A673 (cell line): ENCODE measurements at regions of chr15 and their contacts with region 1.

Region 1: DNA sequence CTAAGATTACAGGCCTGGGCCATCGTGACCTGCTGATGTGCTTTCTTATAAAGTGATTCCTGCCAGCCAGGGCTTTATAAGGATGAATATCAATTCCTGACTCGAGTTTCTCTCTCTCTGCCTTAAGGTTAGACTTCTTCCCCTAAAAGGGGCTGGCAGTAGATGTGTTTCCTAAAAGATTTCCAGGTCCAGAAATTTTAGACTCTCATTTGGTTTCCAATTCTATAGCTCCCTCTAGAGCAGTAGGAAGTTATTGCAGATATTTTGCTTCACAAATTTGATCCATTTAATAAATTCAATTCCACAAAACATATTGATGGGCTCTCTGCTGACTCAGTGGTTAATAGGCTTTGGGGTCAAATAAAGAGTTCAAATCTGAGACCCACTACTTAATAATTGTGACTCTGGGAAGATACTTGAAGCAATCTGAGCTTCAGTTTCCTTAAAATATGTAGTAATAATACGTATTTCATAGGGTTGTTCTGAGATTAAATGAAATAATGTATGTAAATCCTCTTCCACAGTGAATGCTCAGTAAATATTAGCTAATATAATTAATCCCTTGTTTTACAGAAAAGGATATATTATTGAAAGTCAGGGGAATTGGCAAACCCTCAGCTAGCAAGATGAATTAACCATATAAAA is 2.1 kb downstream of the TRIM69 start:
- DNase-seq: peak; percentile 85
- H3K4me3 ChIP-seq: no peak overlapping the region
- H3K27ac ChIP-seq: no peak overlapping the region
- H3K4me1 ChIP-seq: peaks cover 30% of the 10 kb centered on the region
- H3K27me3 ChIP-seq: no peaks in the 10 kb centered on the region
- CTCF ChIP-seq: peak; percentile 81

Region 2: GRCh38 chr15:44311136-44311535 is 427.3 kb before region 1 on chr15:
- CTCF ChIA-PET with region 1: no interaction called
- POLR2A ChIA-PET with region 1: interaction called, 12 read pairs
- intact Hi-C with region 1: no loop called
- DNase-seq: no peak
- H3K4me3 ChIP-seq: no peak overlapping the region
- H3K27ac ChIP-seq: no peak overlapping the region
- H3K4me1 ChIP-seq: no peaks in the 10 kb centered on the region
- H3K27me3 ChIP-seq: no peaks in the 10 kb centered on the region
- CTCF ChIP-seq: no peak

Region 3: GRCh38 chr15:44593042-44593736 is 145.3 kb before region 1 on chr15:
- CTCF ChIA-PET with region 1: interaction called, 11 read pairs
- POLR2A ChIA-PET with region 1: no interaction called
- intact Hi-C with region 1: no loop called
- DNase-seq: peak; percentile 59
- H3K4me3 ChIP-seq: no peak overlapping the region
- H3K27ac ChIP-seq: no peak overlapping the region
- H3K4me1 ChIP-seq: no peaks in the 10 kb centered on the region
- H3K27me3 ChIP-seq: no peaks in the 10 kb centered on the region
- CTCF ChIP-seq: peak; percentile 65

Region 4: DNA sequence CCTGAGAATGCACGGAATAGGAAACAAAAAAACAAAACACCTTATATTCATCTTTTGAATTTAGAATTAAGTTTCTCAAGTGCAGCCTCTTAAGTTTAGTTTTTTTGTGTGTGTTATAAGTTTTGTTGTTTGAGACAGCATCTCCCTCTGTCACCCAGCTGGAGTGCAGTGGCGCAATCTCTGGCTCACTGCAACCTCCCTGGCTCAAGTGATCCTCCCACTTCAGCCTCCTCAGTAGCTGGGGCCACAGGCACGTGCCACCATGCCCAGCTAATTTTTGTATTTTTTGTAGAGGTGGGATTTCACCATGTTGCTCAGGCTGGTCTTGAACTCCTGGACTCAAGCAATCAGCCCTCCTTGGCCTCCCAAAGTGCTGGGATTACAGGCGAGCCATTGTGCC is 68.4 kb before region 1 on chr15:
- CTCF ChIA-PET with region 1: interaction called, 10 read pairs
- POLR2A ChIA-PET with region 1: no interaction called
- intact Hi-C with region 1: no loop called
- DNase-seq: no peak
- H3K4me3 ChIP-seq: no peak overlapping the region
- H3K27ac ChIP-seq: no peak overlapping the region
- H3K4me1 ChIP-seq: no peaks in the 10 kb centered on the region
- H3K27me3 ChIP-seq: no peaks in the 10 kb centered on the region
- CTCF ChIP-seq: no peak

Region 5: DNA sequence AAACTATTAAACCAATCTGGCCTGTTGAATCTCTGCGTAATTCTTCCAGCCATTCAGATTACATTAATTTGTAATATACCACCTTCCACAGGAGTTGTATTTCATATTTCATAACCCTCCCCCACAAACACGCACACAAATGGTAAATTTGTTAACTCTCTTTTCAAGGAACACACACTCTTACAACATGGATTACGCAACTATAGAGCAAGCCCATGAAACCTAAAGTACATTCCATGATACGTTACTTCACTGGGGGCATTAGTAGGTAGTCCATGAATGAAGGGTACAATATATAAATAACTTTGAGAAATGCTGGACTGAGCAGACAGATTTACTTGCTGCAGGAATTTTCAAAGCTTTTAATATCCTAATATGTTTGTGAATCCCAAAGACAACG is 62.9 kb after region 1 on chr15:
- CTCF ChIA-PET with region 1: no interaction called
- POLR2A ChIA-PET with region 1: interaction called, 10 read pairs
- intact Hi-C with region 1: no loop called
- DNase-seq: no peak
- H3K4me3 ChIP-seq: no peak overlapping the region
- H3K27ac ChIP-seq: no peak overlapping the region
- H3K4me1 ChIP-seq: peaks cover 19% of the 10 kb centered on the region
- H3K27me3 ChIP-seq: no peaks in the 10 kb centered on the region
- CTCF ChIP-seq: no peak